Mammary epithelial cell (primary cell): ENCODE measurements at regions of chr4 and their contacts with region 1.

Region 1: DNA sequence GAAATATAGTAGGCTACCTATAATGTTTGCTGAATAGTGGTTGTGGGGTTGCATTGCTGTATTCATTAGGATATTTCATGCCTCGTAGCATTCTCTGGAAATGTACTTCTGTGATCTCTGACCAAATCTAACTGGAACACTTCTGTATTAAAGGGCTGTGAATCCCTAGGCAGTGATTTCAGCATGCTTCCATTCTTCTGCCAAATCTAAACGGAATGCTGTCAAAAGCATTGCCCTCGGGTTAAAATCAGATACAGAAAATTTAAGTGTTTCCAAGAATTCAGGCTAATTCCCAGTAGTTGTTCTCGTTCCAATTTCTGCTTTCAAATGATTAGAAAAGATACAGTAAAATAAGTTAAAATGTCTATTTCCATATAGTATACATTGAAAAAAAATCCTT is 1847.5 kb upstream of the IGFBP7 start:
- DNase-seq: no peak
- H3K4me3 ChIP-seq: no peak overlapping the region
- H3K27ac ChIP-seq: no peak overlapping the region
- H3K4me1 ChIP-seq: no peaks in the 10 kb centered on the region
- H3K27me3 ChIP-seq: no peaks in the 10 kb centered on the region
- CTCF ChIP-seq: no peak

Region 2: GRCh38 chr4:58871509-58871908 is 86.2 kb before region 1 on chr4:
- CTCF ChIA-PET with region 1: no interaction called
- dilution Hi-C with region 1: no loop called
- in situ Hi-C with region 1: loop called in 1 of 2 experiments (anchors 25 kb)
- intact Hi-C with region 1: no loop called
- DNase-seq: no peak
- H3K4me3 ChIP-seq: no peak overlapping the region
- H3K27ac ChIP-seq: no peak overlapping the region
- H3K4me1 ChIP-seq: no peaks in the 10 kb centered on the region
- H3K27me3 ChIP-seq: no peaks in the 10 kb centered on the region
- CTCF ChIP-seq: no peak